Psoas muscle (tissue), 8 donors: ENCODE measurements at regions of chr3 and their contacts with region 1.

Region 1: DNA sequence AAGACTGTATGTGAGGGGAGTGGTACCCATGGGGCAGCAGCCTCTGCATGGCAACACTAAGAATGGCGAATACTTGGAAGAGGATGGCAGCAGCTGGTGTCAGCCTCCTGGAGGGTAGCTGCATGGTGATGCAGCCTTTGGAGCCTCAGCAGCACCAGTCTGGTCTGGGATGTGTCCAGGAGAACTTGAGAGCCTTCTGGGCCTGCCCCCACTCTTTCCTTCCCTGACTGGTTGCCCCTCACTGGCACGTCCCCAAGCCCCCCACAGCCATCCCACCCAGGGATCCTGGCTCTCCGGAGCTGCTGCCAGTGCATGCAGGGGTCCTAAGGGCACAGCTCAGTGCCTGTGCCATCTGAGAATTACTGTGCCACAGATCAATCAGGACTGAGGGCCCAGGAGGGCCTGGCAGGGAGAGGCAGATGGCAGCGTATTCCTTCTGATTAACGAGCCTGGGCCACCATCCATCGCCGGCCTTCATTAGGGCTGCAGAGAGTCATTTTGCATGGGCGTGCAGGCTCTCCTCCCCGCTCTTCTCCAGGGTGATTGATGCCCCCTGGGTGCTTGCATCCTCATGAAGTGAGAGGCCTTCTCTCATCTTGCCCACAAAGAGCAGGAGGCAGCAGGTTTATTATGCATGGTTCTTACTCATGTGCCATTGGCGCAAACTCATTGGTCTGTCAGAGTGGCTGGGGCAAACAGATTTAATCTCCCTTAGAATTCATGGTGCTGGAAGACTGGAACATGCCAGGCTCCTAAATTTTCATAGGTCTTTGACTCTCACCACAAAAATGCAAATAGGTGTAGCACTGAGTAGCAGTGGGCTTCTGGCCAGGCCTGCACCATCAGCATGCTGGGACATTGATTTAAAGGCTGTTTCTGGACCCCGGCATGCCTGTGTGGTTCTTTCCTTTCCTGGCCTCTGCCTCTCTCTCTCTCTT is 116.8 kb downstream of the EPHB1 start:
- DNase-seq: no peak
- ATAC-seq: no peak
- H3K4me3 ChIP-seq: no peak overlapping the region
- H3K27ac ChIP-seq: no peak overlapping the region
- H3K4me1 ChIP-seq: no peaks in the 10 kb centered on the region
- H3K27me3 ChIP-seq: no peaks in the 10 kb centered on the region
- CTCF ChIP-seq: no peak

Region 2: DNA sequence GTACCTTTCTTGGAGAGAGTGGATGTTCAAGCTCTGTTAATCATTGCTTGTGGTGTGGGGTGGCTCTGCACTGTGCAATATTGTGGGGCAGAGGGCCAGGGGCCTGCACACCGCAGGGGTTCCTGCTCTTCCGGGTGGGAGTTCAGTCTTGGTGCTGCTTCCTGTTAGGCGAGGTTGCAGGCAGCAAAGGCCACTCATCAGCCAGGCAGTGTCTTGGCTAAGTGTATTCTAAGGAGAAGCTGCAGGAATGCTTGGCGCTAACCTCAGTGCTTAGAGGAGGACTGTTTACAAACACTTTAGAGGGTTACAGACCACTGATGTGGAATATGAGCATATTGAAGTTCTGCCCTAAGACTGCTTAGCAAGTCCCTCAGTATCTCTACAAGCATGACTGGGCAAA is 344.3 kb before region 1 on chr3:
- intact Hi-C with region 1: no loop called
- DNase-seq: no peak
- ATAC-seq: no peak
- H3K4me3 ChIP-seq: no peak overlapping the region
- H3K27ac ChIP-seq: no peak overlapping the region
- H3K4me1 ChIP-seq: no peaks in the 10 kb centered on the region
- H3K27me3 ChIP-seq: no peaks in the 10 kb centered on the region
- CTCF ChIP-seq: no peak

Region 3: GRCh38 chr3:134952371-134952770 is 40.5 kb after region 1 on chr3:
- intact Hi-C with region 1: loop called in 1 of 2 experiments (anchors 5 kb)
- DNase-seq: no peak
- ATAC-seq: no peak
- H3K4me3 ChIP-seq: no peak overlapping the region
- H3K27ac ChIP-seq: no peak overlapping the region
- H3K4me1 ChIP-seq: no peaks in the 10 kb centered on the region
- H3K27me3 ChIP-seq: no peaks in the 10 kb centered on the region
- CTCF ChIP-seq: no peak